Naive thymus-derived CD4-positive, alpha-beta T cell (primary cell): ENCODE measurements at regions of chr19 and their contacts with region 1.

Region 1: DNA sequence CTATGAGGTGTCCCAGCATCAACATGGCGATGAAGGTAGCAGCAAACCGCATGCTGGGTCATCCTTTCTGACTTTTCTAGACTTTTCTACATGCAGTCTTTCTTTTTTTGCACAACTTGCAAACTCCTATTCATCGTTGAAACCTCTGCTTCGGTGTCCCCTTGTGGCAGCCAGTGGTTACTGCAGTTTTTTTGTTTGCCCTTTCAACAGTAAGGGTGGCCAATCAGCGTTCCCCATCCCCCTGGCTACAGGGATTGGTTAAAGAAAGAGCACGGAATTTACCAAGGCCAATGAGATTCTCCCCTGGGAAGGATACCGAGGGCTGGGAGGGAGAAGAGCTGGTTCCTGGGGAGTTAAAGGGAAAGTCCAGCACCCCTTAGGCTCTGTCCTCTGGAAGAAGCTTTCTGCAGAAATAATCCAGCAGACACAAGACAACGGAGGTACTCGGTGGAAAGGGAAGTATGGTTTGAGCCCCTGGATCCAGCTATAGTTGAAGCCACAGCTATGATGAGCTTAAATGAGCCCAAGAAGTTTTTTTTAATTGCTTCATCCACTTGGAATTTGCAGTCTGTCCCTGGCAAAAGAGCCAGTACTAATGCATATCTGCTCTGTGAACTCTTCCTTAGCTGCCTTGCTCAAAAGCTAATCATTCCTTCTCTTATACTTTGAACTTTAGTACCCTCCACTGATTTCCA is 5.6 kb upstream of the LSM4 start:
- DNase-seq: peak; percentile 55 to 92 (median 90)
- ATAC-seq: peak; percentile 99
- H3K4me3 ChIP-seq: peak overlapping the region; percentile 52
- H3K4me3 Mint-ChIP-seq: peak overlapping the region; percentile 62 to 87 (median 78)
- H3K27ac ChIP-seq: peak overlapping the region; percentile 45
- H3K27ac Mint-ChIP-seq: peak overlapping the region in 8 of 9 donors; percentile 38 to 75 (median 72)
- H3K4me1 ChIP-seq: peaks cover 12% of the 10 kb centered on the region in 2 donors
- H3K4me1 Mint-ChIP-seq: peaks cover 13 to 23% (median 20%) of the 10 kb centered on the region in 7 donors
- H3K27me3 ChIP-seq: no peaks in the 10 kb centered on the region
- H3K27me3 Mint-ChIP-seq: no peaks in the 10 kb centered on the region

Region 2: GRCh38 chr19:18224525-18225354 is 103.7 kb before region 1 on chr19:
- CTCF ChIA-PET with region 1: no interaction called
- POLR2A ChIA-PET with region 1: no interaction called
- intact Hi-C with region 1: loop called in 1 of 2 experiments (anchors 1 kb)
- DNase-seq: peak; percentile 65 to 87 (median 80)
- ATAC-seq: peak; percentile 98
- H3K4me3 ChIP-seq: peak overlapping the region; percentile 46
- H3K4me3 Mint-ChIP-seq: peak overlapping the region; percentile 80 to 90 (median 87)
- H3K27ac ChIP-seq: no peak overlapping the region
- H3K27ac Mint-ChIP-seq: peak overlapping the region in 2 of 9 donors; percentile 41 to 68
- H3K4me1 ChIP-seq: peaks cover 6 to 16% of the 10 kb centered on the region in 2 donors
- H3K4me1 Mint-ChIP-seq: peaks cover 11 to 25% (median 20%) of the 10 kb centered on the region in 7 donors
- H3K27me3 ChIP-seq: peaks cover 12 to 28% of the 10 kb centered on the region in 2 donors
- H3K27me3 Mint-ChIP-seq: peaks cover 43 to 66% (median 56%) of the 10 kb centered on the region in 5 donors

Region 3: DNA sequence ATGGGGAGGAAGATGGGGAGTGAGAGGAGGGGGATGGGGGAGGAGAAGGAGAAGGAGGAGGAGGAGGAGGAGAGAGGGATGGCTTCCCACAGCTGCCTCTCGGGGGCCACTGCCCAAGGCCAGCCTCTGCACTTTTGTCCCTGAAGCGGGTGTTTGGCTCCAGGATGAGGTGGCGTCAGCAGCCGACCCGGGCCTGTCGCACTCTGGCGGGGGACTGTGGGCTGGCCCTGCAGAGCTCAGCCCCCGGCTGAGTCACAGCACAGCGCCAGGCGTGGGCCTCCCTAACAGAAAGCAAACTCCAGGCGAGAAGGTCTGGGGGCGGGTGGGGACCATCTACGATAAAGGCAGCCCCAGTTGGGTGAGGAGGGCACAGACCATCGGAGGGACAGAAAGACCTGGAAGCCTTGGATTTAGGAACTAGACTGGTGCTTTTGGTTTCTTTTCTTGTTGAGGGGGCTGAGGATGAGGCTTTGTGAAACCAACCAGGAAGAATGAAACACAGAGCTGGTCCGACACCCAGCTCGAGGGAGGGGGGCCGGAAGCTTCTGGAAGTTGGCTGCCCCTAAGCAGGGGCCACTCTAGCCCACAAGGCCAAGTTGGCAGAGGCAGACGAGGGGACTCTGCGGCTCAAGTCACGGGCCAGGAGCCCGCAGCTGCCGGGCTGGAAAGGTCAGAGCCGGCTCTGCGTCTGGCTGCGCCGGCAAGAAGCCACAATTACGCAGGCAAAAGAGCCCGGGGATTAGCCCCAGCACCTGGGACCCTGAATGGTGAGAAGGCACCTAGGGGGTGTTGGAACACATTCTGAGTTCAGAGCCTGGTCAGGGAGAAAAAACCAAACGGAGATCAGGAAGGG is 23.8 kb before region 1 on chr19:
- CTCF ChIA-PET with region 1: no interaction called
- POLR2A ChIA-PET with region 1: interaction called, 96 read pairs
- intact Hi-C with region 1: loop called (anchors 1 kb)
- DNase-seq: peak; percentile 47 to 85 (median 57)
- ATAC-seq: peak; percentile 84
- H3K4me3 ChIP-seq: peak overlapping the region; percentile 75
- H3K4me3 Mint-ChIP-seq: peak overlapping the region; percentile 90 to 98 (median 94)
- H3K27ac ChIP-seq: peak overlapping the region; percentile 97
- H3K27ac Mint-ChIP-seq: peak overlapping the region; percentile 95 to 100 (median 98)
- H3K4me1 ChIP-seq: peaks cover 31 to 37% of the 10 kb centered on the region in 2 donors
- H3K4me1 Mint-ChIP-seq: peaks cover 12 to 47% (median 43%) of the 10 kb centered on the region in 7 donors
- H3K27me3 ChIP-seq: no peaks in the 10 kb centered on the region
- H3K27me3 Mint-ChIP-seq: no peaks in the 10 kb centered on the region

Region 4: GRCh38 chr19:18340190-18340989 is 11.9 kb after region 1 on chr19 and contains the start of gene PGPEP1:
- CTCF ChIA-PET with region 1: interaction called, 17 read pairs
- POLR2A ChIA-PET with region 1: interaction called, 12 read pairs
- intact Hi-C with region 1: loop called in 1 of 2 experiments (anchors 1 kb)
- DNase-seq: peak in 8 of 9 donors; percentile 32 to 80 (median 54)
- ATAC-seq: peak; percentile 81
- H3K4me3 ChIP-seq: peak within 1 kb of the TSS; percentile 66
- H3K4me3 Mint-ChIP-seq: peak within 1 kb of the TSS; percentile 77 to 95 (median 90)
- H3K27ac ChIP-seq: peak within 1 kb of the TSS; percentile 74
- H3K27ac Mint-ChIP-seq: peak within 1 kb of the TSS; percentile 70 to 96 (median 90)
- H3K4me1 ChIP-seq: peaks cover 11 to 13% of the 10 kb centered on the region in 2 donors
- H3K4me1 Mint-ChIP-seq: peaks cover 12 to 25% (median 21%) of the 10 kb centered on the region in 7 donors
- H3K27me3 ChIP-seq: no peaks in the 10 kb centered on the region
- H3K27me3 Mint-ChIP-seq: no peaks in the 10 kb centered on the region
- total RNA-seq, gene PGPEP1: 26.6 to 57.1 (median 43.8) TPM

Region 5: DNA sequence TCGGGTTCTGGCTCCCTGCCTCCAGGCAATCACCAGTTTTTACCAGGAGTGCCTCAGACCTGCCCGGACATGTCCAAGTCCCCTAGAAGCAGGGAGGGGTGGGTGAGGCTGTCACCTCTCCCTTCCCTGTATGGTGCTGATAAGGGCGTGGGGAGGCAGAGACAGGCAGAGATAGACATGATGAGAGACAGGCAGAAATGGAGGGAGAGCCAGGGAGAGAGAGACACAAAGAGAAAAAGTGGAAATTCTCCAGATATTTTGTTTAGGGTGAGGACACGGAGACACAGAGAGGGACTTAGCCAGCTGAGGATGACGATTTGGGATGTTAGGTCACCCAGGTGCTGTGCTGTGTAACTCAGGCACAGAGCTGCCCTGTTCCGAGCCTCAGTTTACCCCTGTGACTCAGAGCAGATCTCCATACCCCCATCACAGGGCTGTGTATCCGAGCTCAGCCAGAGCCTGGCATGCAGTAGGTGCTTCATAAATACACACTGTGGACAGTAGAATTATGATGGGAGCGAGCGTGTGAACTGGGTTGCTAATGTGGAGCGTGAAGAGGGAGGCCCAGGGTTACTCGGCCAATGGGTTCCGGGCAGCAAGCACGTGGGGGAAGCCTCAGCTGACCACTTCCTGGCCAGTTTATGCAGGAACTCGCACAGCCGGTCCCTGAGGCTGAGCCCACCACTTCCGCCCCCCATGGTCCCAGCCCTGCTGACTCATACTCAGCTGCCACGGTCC is 45.6 kb after region 1 on chr19:
- CTCF ChIA-PET with region 1: no interaction called
- POLR2A ChIA-PET with region 1: no interaction called
- intact Hi-C with region 1: no loop called
- DNase-seq: peak in 2 of 9 donors; percentile 37 to 60
- ATAC-seq: peak; percentile 96
- H3K4me3 ChIP-seq: no peak overlapping the region
- H3K4me3 Mint-ChIP-seq: peak overlapping the region in 1 of 10 donors; percentile 51
- H3K27ac ChIP-seq: no peak overlapping the region
- H3K27ac Mint-ChIP-seq: peak overlapping the region in 2 of 9 donors; percentile 66 to 68
- H3K4me1 ChIP-seq: peaks cover 0 to 9% of the 10 kb centered on the region in 2 donors
- H3K4me1 Mint-ChIP-seq: peaks cover 0 to 10% (median 7%) of the 10 kb centered on the region in 7 donors
- H3K27me3 ChIP-seq: no peaks in the 10 kb centered on the region
- H3K27me3 Mint-ChIP-seq: peaks cover 3 to 9% (median 7%) of the 10 kb centered on the region in 5 donors

Region 6: GRCh38 chr19:18436671-18437490 is 108.4 kb after region 1 on chr19:
- CTCF ChIA-PET with region 1: no interaction called
- POLR2A ChIA-PET with region 1: no interaction called
- intact Hi-C with region 1: no loop called
- DNase-seq: peak in 8 of 9 donors; percentile 60 to 79 (median 72)
- ATAC-seq: peak; percentile 68
- H3K4me3 ChIP-seq: peak overlapping the region; percentile 41
- H3K4me3 Mint-ChIP-seq: peak overlapping the region; percentile 73 to 89 (median 83)
- H3K27ac ChIP-seq: peak overlapping the region; percentile 69
- H3K27ac Mint-ChIP-seq: peak overlapping the region in 6 of 9 donors; percentile 22 to 71 (median 42)
- H3K4me1 ChIP-seq: peaks cover 5 to 16% of the 10 kb centered on the region in 2 donors
- H3K4me1 Mint-ChIP-seq: peaks cover 0 to 37% (median 27%) of the 10 kb centered on the region in 7 donors
- H3K27me3 ChIP-seq: no peaks in the 10 kb centered on the region
- H3K27me3 Mint-ChIP-seq: no peaks in the 10 kb centered on the region